Activated CD8-positive, alpha-beta memory T cell treated with anti-CD3 and anti-CD28 coated beads, Interleukin-2, amount 10 ng/mL, durations not matched to agents 7 days and 5 days (primary cell): ENCODE measurements at regions of chr10 and their contacts with region 1.

Region 1: DNA sequence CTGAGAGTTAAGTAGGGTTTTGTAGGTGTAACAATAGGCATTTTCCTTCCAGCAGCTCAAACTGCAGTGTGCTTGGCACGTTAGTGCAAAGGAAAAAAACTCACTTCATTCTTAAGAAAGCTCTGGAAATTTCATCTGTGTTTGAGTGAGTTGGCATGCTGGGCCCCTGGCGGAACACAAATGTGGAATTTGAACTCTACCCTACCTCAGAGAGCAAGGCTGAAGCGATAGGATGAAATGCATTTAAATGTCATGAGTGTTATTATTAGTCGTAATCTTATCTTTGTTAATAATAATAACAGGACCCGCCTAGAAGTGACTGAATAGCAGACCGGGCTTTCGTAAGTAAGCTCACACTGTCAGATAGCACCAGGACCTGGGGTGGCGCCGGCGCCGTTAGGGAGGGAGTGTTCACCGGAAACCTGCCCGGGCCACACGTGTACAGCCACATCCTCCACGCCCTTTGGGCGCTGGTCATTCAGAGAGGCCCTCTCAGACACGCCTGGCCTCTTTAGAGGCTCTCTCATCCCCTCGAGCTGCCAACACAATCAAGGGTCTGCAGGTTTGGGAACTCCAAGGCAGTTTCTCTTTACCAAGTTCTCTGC is 63.5 kb downstream of the GRK5 start:
- DNase-seq: peak; percentile 87
- ATAC-seq: peak; percentile 60
- H3K4me3 Mint-ChIP-seq: peak overlapping the region; percentile 49
- H3K27ac Mint-ChIP-seq: peak overlapping the region; percentile 95
- H3K4me1 Mint-ChIP-seq: peaks cover 58% of the 10 kb centered on the region
- H3K27me3 Mint-ChIP-seq: no peaks in the 10 kb centered on the region

Region 2: GRCh38 chr10:119120413-119120867 is 150.4 kb before region 1 on chr10:
- CTCF ChIA-PET with region 1: no interaction called
- DNase-seq: peak; percentile 57
- ATAC-seq: peak; percentile 88
- H3K4me3 Mint-ChIP-seq: no peak overlapping the region
- H3K27ac Mint-ChIP-seq: peak overlapping the region; percentile 88
- H3K4me1 Mint-ChIP-seq: peaks cover 26% of the 10 kb centered on the region
- H3K27me3 Mint-ChIP-seq: no peaks in the 10 kb centered on the region

Region 3: DNA sequence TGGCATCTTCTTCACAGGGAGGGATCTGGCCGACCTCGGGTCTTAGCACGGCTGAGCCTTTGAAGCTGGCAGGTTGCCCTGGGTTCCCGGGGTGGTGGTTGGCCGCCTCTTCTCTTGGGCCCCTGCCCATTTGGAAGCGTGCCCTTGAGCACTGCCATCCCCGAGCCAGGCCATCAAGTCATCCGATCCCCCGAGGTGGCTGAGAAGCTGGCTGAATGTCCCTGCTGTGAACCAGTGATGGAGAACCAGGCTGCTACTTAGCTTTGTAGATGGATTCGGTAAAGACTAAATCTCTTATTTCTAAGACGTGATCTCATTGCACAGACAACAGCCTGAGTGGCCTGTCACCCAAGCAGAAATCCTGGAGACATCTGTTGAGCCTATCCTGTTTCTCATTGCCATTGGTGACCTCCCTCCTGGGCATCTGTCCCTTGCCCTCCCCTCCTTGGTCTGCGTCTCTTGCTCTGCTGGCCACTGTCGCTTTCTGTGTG is 10.8 kb after region 1 on chr10:
- CTCF ChIA-PET with region 1: interaction called, 17 read pairs
- DNase-seq: no peak
- ATAC-seq: no peak
- H3K4me3 Mint-ChIP-seq: no peak overlapping the region
- H3K27ac Mint-ChIP-seq: no peak overlapping the region
- H3K4me1 Mint-ChIP-seq: peaks cover 45% of the 10 kb centered on the region
- H3K27me3 Mint-ChIP-seq: no peaks in the 10 kb centered on the region

Region 4: DNA sequence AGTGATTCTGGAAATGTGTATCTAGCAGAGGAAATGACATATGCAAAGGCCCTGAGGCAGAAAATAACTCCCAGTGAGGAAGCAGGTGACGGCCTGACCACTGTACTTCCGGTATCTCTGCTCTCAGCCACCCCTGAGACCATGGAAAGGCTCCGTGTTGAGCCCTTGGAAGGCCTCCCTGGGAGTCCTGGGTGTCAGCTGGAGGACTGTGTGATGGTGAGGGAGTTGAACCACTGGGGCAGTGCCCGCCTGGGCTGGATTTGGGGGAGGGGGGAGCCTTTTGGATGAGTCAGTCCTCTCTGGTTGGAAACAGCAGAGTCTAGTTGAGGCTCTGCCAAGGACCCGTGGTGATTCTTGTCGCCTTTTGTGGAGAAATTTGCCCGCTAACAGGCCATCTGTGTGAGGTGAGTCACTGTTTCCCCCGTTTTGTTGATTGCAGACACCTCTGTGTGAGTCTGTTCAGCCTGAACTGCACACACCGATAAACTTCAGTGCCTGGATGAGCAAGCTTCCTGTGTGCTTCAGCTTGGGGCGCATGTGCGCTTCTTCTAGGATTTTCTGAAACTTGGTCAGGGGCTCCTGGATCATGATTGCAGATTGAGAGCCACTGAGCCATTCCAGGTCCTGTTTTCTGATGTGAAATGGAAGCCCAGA is 35.1 kb after region 1 on chr10:
- CTCF ChIA-PET with region 1: interaction called, 30 read pairs
- DNase-seq: peak; percentile 96
- ATAC-seq: peak; percentile 83
- H3K4me3 Mint-ChIP-seq: peak overlapping the region; percentile 74
- H3K27ac Mint-ChIP-seq: peak overlapping the region; percentile 99
- H3K4me1 Mint-ChIP-seq: peaks cover 84% of the 10 kb centered on the region
- H3K27me3 Mint-ChIP-seq: peaks cover 11% of the 10 kb centered on the region